CD14-positive monocyte (primary cell): ENCODE measurements at regions of chr12 and their contacts with region 1.

Region 1: GRCh38 chr12:14948672-14949071 is 10.3 kb upstream of the ERP27 start:
- DNase-seq: peak; percentile 65 to 81 (median 81)
- H3K4me3 ChIP-seq: peak overlapping the region in 1 of 3 experiments; percentile 21
- H3K4me3 Mint-ChIP-seq: peak overlapping the region; percentile 21 to 50
- H3K27ac ChIP-seq: peak overlapping the region; percentile 54 to 89
- H3K27ac Mint-ChIP-seq: peak overlapping the region; percentile 90 to 99 (median 95)
- H3K4me1 ChIP-seq: peaks cover 54 to 55% of the 10 kb centered on the region in 2 donors
- H3K4me1 Mint-ChIP-seq: peaks cover 50% of the 10 kb centered on the region
- H3K27me3 ChIP-seq: no peaks in the 10 kb centered on the region
- H3K27me3 Mint-ChIP-seq: no peaks in the 10 kb centered on the region
- CTCF ChIP-seq: no peak

Region 2: GRCh38 chr12:14567351-14568162 is 381.1 kb before region 1 on chr12 and contains the start of gene PLBD1:
- intact Hi-C with region 1: loop called in 1 of 2 experiments (anchors 10 kb)
- DNase-seq: peak; percentile 62 to 64 (median 63)
- H3K4me3 ChIP-seq: peak within 1 kb of the TSS; percentile 51 to 85 (median 64)
- H3K4me3 Mint-ChIP-seq: peak within 1 kb of the TSS; percentile 85 to 94
- H3K27ac ChIP-seq: peak within 1 kb of the TSS; percentile 95 to 96
- H3K27ac Mint-ChIP-seq: peak within 1 kb of the TSS; percentile 90 to 97 (median 96)
- H3K4me1 ChIP-seq: peaks cover 56 to 69% of the 10 kb centered on the region in 2 donors
- H3K4me1 Mint-ChIP-seq: peaks cover 68% of the 10 kb centered on the region
- H3K27me3 ChIP-seq: no peaks in the 10 kb centered on the region
- H3K27me3 Mint-ChIP-seq: no peaks in the 10 kb centered on the region
- CTCF ChIP-seq: no peak
- polyA plus RNA-seq, gene PLBD1: 317 to 876 (median 543) TPM

Region 3: DNA sequence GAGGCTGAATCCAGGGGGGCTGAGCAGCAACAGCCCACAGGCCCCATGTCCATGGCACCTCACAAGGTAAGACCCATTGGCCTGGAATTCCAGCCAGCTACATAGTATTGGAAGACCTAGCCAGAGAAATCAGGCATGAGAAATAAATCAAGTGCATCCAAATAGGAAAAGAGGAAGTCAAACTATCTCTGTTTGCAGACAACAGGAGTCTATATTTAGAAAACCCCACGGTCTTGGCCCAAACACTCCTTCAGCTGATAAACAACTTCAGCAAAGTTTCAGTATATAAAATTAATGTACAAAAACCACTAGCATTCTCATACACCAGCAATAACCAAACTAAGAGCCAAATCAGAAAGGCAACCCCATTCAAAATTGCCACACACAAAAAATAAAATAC is 41.1 kb after region 1 on chr12:
- intact Hi-C with region 1: loop called (anchors 5 kb)
- DNase-seq: peak in 2 of 3 donors; percentile 31 to 49
- H3K4me3 ChIP-seq: peak overlapping the region in 1 of 3 experiments; percentile 47
- H3K4me3 Mint-ChIP-seq: peak overlapping the region in 1 of 2 donors; percentile 47
- H3K27ac ChIP-seq: peak overlapping the region; percentile 40 to 75
- H3K27ac Mint-ChIP-seq: peak overlapping the region; percentile 77 to 93 (median 91)
- H3K4me1 ChIP-seq: peaks cover 37 to 67% of the 10 kb centered on the region in 2 donors
- H3K4me1 Mint-ChIP-seq: peaks cover 73% of the 10 kb centered on the region
- H3K27me3 ChIP-seq: no peaks in the 10 kb centered on the region
- H3K27me3 Mint-ChIP-seq: no peaks in the 10 kb centered on the region
- CTCF ChIP-seq: no peak

Region 4: DNA sequence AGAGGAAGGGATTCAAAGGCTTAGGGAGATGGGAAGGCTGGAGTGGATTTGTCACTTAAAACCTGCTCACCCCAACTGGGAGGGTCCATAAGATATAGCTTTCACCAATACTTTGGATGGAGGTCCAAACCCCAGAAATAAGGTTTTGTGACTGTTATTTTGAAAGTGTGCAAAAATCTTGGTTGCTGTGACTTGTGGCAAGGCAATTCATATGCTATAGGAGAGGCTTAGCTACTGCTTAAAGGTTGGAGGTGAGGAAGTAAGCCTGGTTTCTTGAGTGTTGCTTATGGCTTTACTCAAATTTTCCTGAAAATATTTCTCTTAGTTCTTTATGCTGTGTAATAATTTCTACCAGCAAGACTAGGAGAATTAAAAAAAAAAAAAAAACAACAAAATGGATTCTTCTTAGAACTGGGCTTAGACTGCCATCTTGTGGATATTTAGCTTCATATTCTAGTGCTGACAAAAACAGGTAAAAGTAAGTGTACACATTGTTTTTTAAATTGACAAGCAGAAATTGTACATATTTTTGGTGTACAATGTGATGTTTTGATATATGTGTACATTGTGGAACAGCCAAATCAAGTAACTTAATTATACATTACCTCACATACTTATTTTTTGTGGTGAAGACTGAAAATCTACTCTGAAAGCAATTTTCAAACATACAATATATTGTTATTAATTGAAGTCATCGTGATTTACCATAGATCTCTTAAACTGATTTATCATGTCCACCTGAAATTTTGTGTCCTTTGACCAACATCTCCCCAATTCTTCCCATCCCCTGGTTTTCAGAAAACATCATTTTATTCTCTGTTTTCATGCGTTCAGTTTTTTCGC is 47.1 kb after region 1 on chr12:
- intact Hi-C with region 1: loop called in 1 of 2 experiments (anchors 5 kb)
- DNase-seq: peak; percentile 36 to 68 (median 63)
- H3K4me3 ChIP-seq: no peak overlapping the region
- H3K4me3 Mint-ChIP-seq: no peak overlapping the region
- H3K27ac ChIP-seq: peak overlapping the region in 1 of 2 donors; percentile 4
- H3K27ac Mint-ChIP-seq: peak overlapping the region in 3 of 7 donors; percentile 33 to 70 (median 38)
- H3K4me1 ChIP-seq: peaks cover 6 to 21% of the 10 kb centered on the region in 2 donors
- H3K4me1 Mint-ChIP-seq: peaks cover 27% of the 10 kb centered on the region
- H3K27me3 ChIP-seq: no peaks in the 10 kb centered on the region
- H3K27me3 Mint-ChIP-seq: peaks cover 1 to 4% (median 3%) of the 10 kb centered on the region in 3 donors
- CTCF ChIP-seq: peak; percentile 80

Region 5: GRCh38 chr12:15700595-15700994 is 751.9 kb after region 1 on chr12:
- intact Hi-C with region 1: loop called in 1 of 2 experiments (anchors 10 kb)
- DNase-seq: peak; percentile 81 to 95 (median 94)
- H3K4me3 ChIP-seq: peak overlapping the region in 1 of 3 experiments; percentile 8
- H3K4me3 Mint-ChIP-seq: peak overlapping the region in 1 of 2 donors; percentile 32
- H3K27ac ChIP-seq: peak overlapping the region in 1 of 2 donors; percentile 83
- H3K27ac Mint-ChIP-seq: peak overlapping the region; percentile 79 to 95 (median 91)
- H3K4me1 ChIP-seq: peaks cover 50 to 58% of the 10 kb centered on the region in 2 donors
- H3K4me1 Mint-ChIP-seq: peaks cover 53% of the 10 kb centered on the region
- H3K27me3 ChIP-seq: no peaks in the 10 kb centered on the region
- H3K27me3 Mint-ChIP-seq: peaks cover 0 to 3% (median 0%) of the 10 kb centered on the region in 3 donors
- CTCF ChIP-seq: no peak